ENCODE measurements at regions of chr9 and their contacts with region 1.

Region 1: GRCh38 chr9:26058111-26058895 is 380.1 kb upstream of the TUSC1 start:
- ATAC-seq: no peak
- H3K4me3 ChIP-seq: no peak overlapping the region
- H3K27ac ChIP-seq: no peak overlapping the region
- H3K4me1 ChIP-seq: peaks cover 0 to 3% of the 10 kb centered on the region in 2 donors

Region 2: DNA sequence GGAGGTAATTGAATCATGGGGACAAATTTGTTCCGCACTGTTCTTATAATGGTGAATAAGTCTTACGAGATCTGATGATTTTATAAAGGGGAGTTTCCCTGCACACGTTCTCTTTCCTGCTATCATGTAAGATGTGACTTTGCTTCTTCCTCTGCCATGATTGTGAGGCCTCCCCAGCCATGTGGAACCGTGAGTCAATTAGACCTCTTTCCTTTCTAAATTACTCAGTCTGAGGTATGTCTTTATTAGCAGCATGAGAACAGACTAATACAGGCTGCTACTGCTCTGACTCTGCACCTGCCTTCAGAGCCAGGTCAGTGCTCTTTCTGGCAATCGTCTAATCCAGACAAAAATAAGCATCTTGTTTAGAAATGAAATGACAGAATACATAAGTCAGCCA is 99.1 kb after region 1 on chr9:
- in situ Hi-C with region 1: loop called in 1 of 9 experiments (anchors 25 kb)
- ATAC-seq: no peak
- H3K4me3 ChIP-seq: no peak overlapping the region
- H3K27ac ChIP-seq: no peak overlapping the region
- H3K4me1 ChIP-seq: peaks cover 3 to 4% of the 10 kb centered on the region in 2 donors